ENCODE measurements at regions of chr3 and their contacts with region 1.

Region 1: DNA sequence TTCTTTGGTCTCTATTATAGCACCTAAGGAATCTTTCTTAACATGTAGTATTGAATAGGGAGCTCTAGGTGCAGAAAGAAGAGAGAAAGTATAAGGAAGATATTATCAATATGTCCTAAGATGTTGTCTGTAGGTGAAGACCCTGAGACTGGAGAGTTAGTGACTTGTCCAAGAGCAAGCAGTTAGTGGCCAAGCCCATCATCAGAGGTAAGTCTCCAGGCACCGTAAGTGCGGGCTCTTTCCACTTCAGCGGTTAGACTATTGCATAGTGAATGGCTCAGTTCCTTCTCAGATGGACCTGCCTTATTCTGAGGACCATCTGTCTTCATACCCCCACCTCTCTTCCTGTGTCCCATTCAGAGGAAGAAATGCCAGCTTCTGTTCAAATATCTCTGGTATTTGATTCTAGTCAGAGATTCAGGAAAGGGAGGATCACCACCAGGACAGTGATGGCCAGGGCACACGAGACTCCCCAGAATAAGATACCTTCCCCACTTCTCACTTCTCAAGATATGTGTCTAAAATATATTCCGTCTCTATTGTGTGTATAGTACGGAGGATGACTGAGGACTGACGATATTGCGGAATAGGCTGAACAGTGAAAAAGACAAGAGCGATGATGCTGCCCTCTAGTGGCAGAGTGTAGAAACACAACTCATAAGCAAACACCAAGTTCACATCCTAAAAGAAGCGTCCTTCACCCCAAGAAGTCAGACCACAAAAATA is 19.1 kb upstream of the ADGRG7 start:
- DNase-seq: peak in 3 of 5 donors; percentile 24 to 40 (median 29)
- ATAC-seq: peak; percentile 42 to 86 (median 80)
- H3K4me3 ChIP-seq: peak overlapping the region in 2 of 12 donors; percentile 17 to 18
- H3K27ac ChIP-seq: no peak overlapping the region
- H3K4me1 ChIP-seq: peaks cover 0 to 4% (median 0%) of the 10 kb centered on the region in 12 donors
- H3K27me3 ChIP-seq: no peaks in the 10 kb centered on the region
- CTCF ChIP-seq: peak; percentile 86 to 96 (median 90)
- POLR2A ChIP-seq: no peak

Region 2: GRCh38 chr3:99825004-99825640 is 765.2 kb before region 1 on chr3:
- intact Hi-C with region 1: loop called in 8 of 10 experiments (anchors 5 to 10 kb)
- DNase-seq: no peak
- ATAC-seq: no peak
- H3K4me3 ChIP-seq: no peak overlapping the region
- H3K27ac ChIP-seq: no peak overlapping the region
- H3K4me1 ChIP-seq: peaks cover 0 to 3% (median 0%) of the 10 kb centered on the region in 12 donors
- H3K27me3 ChIP-seq: no peaks in the 10 kb centered on the region
- CTCF ChIP-seq: no peak
- POLR2A ChIP-seq: no peak

Region 3: GRCh38 chr3:99833617-99834205 is 756.6 kb before region 1 on chr3:
- intact Hi-C with region 1: loop called in 8 of 10 experiments (anchors 5 to 10 kb)
- DNase-seq: no peak
- ATAC-seq: peak in 1 of 4 donors; percentile 18
- H3K4me3 ChIP-seq: no peak overlapping the region
- H3K27ac ChIP-seq: peak overlapping the region in 5 of 12 donors; percentile 5 to 37 (median 26)
- H3K4me1 ChIP-seq: peaks cover 0 to 42% (median 15%) of the 10 kb centered on the region in 12 donors
- H3K27me3 ChIP-seq: no peaks in the 10 kb centered on the region
- CTCF ChIP-seq: no peak
- POLR2A ChIP-seq: no peak

Region 4: GRCh38 chr3:100006570-100007271 is 583.6 kb before region 1 on chr3:
- intact Hi-C with region 1: no loop called
- DNase-seq: no peak
- ATAC-seq: peak in 2 of 4 donors; percentile 12 to 26
- H3K4me3 ChIP-seq: no peak overlapping the region
- H3K27ac ChIP-seq: peak overlapping the region in 11 of 12 donors; percentile 4 to 78 (median 51)
- H3K4me1 ChIP-seq: peaks cover 10 to 80% (median 56%) of the 10 kb centered on the region in 12 donors
- H3K27me3 ChIP-seq: no peaks in the 10 kb centered on the region
- CTCF ChIP-seq: peak in 4 of 12 donors; percentile 21 to 32 (median 28)
- POLR2A ChIP-seq: no peak

Region 5: GRCh38 chr3:100311011-100311410 is 279.3 kb before region 1 on chr3:
- intact Hi-C with region 1: loop called (anchors 2 to 10 kb)
- DNase-seq: no peak
- ATAC-seq: no peak
- H3K4me3 ChIP-seq: no peak overlapping the region
- H3K27ac ChIP-seq: no peak overlapping the region
- H3K4me1 ChIP-seq: no peaks in the 10 kb centered on the region
- H3K27me3 ChIP-seq: no peaks in the 10 kb centered on the region
- CTCF ChIP-seq: no peak
- POLR2A ChIP-seq: no peak

Region 6: DNA sequence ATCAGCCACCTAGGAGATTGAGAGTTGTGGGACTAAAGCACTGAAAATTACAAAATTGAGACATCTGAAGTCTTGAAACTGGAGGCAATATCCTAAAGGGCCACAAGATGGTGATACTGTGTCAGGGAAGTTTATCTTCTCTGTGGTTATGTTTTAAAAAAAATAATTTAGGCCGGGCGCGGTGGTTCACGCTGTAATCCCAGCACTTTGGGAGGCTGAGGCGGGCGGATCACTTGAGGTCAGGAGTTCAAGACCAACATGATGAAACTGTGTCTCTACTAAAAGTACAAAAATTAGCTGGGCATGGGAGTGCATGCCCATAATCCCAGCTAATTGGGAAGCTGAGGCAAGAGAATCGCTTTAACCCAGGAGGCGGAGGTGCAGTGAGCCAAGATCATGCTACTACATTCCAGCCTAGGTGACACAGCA is 273.6 kb before region 1 on chr3:
- intact Hi-C with region 1: loop called (anchors 2 to 10 kb)
- DNase-seq: peak in 1 of 5 donors; percentile 17
- ATAC-seq: peak; percentile 47 to 86 (median 68)
- H3K4me3 ChIP-seq: no peak overlapping the region
- H3K27ac ChIP-seq: no peak overlapping the region
- H3K4me1 ChIP-seq: peaks cover 0 to 10% (median 0%) of the 10 kb centered on the region in 12 donors
- H3K27me3 ChIP-seq: no peaks in the 10 kb centered on the region
- CTCF ChIP-seq: peak; percentile 47 to 76 (median 62)
- POLR2A ChIP-seq: no peak

Region 7: GRCh38 chr3:100454677-100455076 is 135.6 kb before region 1 on chr3:
- intact Hi-C with region 1: loop called in 1 of 10 experiments (anchors 5 kb)
- DNase-seq: no peak
- ATAC-seq: no peak
- H3K4me3 ChIP-seq: no peak overlapping the region
- H3K27ac ChIP-seq: no peak overlapping the region
- H3K4me1 ChIP-seq: no peaks in the 10 kb centered on the region
- H3K27me3 ChIP-seq: no peaks in the 10 kb centered on the region
- CTCF ChIP-seq: no peak
- POLR2A ChIP-seq: no peak

Region 8: DNA sequence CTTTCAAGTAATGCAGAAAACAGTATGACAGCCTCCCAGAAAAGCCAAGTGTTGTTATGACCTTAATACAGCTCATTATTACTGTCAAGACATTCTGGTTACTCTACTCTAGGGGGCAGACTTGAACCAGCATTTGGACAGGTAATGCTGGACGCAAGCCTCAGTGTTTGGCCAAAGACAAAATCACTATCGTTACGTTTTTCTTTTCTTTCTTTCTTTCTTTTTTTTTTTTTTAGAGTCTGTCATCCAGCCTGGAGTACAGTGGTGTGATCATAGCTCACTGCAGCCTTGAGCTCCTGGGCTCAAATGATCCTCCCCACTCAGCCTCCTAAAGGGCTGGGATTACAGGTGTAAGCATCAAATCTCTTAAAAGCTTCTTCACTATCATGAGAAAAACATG is 127.3 kb before region 1 on chr3:
- intact Hi-C with region 1: loop called (anchors 1 to 5 kb)
- DNase-seq: peak in 1 of 5 donors; percentile 10
- ATAC-seq: peak in 3 of 4 donors; percentile 77 to 89 (median 85)
- H3K4me3 ChIP-seq: no peak overlapping the region
- H3K27ac ChIP-seq: no peak overlapping the region
- H3K4me1 ChIP-seq: peaks cover 0 to 9% (median 0%) of the 10 kb centered on the region in 12 donors
- H3K27me3 ChIP-seq: no peaks in the 10 kb centered on the region
- CTCF ChIP-seq: peak; percentile 47 to 79 (median 62)
- POLR2A ChIP-seq: no peak